Left colon (tissue), 2 donors: ENCODE measurements at regions of chr4 and their contacts with region 1.

Region 1: GRCh38 chr4:112633477-112634235 is 3.1 kb downstream of the ZGRF1 start:
- DNase-seq: no peak
- ATAC-seq: no peak

Region 2: DNA sequence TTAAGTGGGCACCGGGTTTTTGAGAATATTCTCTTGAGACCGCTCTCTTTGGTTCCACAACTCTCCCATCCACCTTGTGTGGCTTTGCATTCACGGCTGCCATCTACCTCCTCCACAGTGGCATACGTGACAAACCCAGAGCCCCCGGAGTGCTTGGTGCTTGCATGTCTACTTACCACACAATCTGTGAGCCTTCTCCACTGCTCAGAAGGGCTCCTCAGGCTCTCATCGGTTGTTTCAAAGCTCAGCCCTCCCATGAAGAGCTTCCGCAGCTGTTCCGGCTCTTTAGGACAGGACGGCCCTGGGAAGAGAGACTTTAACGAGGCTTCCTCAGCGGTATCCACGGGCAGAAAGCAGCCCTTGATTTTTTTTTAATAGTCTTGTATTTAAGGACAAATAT is 248.2 kb after region 1 on chr4:
- intact Hi-C with region 1: no loop called
- DNase-seq: no peak
- ATAC-seq: no peak

Region 3: GRCh38 chr4:112951362-112952312 is 318.0 kb after region 1 on chr4:
- intact Hi-C with region 1: loop called in 1 of 2 experiments (anchors 5 kb)
- DNase-seq: no peak
- ATAC-seq: no peak